ENCODE measurements at regions of chr17 and their contacts with region 1.

Region 1: DNA sequence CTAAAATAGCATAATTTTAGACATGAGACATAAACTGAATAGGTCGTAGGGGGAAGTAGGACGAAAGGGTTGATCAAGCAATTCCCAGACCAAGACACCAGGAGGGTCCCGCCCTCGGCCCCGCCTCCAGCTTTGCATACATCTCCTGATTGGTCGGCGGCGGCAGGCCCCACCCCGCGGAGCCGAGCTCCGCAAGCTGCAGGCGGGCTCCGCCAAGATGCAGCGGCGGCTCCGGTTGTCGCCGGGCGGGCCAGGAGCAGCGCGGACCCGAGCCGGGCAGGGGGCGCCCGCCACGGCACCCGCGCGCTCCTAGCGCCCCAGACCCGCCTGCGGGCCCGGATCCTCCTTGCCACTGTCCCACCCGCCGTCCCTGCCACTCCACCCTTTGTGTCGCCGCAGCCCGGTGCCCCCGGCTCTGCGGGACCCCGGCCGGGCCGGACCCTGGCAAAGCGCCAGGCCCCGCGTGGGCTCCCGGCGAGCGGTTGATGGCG is at the start of gene CDR2L:
- DNase-seq: peak; percentile 96 to 97
- ATAC-seq: peak; percentile 87 to 94 (median 92)
- H3K4me3 ChIP-seq: peak within 1 kb of the TSS; percentile 63 to 92 (median 80)
- H3K27ac ChIP-seq: peak within 1 kb of the TSS; percentile 87 to 100 (median 98)
- H3K4me1 ChIP-seq: peaks cover 0 to 52% (median 30%) of the 10 kb centered on the region in 9 donors
- H3K27me3 ChIP-seq: peaks cover 0 to 17% (median 0%) of the 10 kb centered on the region in 7 donors
- CTCF ChIP-seq: no peak
- total RNA-seq, gene CDR2L: 10.8 to 25.3 (median 16.3) TPM

Region 2: GRCh38 chr17:74923533-74924249 is 63.8 kb before region 1 on chr17:
- intact Hi-C with region 1: no loop called
- DNase-seq: peak; percentile 54 to 78
- ATAC-seq: peak; percentile 55 to 72 (median 62)
- H3K4me3 ChIP-seq: peak overlapping the region in 9 of 10 donors; percentile 16 to 46 (median 30)
- H3K27ac ChIP-seq: no peak overlapping the region
- H3K4me1 ChIP-seq: peaks cover 2 to 31% (median 22%) of the 10 kb centered on the region in 9 donors
- H3K27me3 ChIP-seq: peaks cover 22 to 96% (median 91%) of the 10 kb centered on the region in 7 donors
- CTCF ChIP-seq: peak; percentile 51 to 93 (median 79)

Region 3: DNA sequence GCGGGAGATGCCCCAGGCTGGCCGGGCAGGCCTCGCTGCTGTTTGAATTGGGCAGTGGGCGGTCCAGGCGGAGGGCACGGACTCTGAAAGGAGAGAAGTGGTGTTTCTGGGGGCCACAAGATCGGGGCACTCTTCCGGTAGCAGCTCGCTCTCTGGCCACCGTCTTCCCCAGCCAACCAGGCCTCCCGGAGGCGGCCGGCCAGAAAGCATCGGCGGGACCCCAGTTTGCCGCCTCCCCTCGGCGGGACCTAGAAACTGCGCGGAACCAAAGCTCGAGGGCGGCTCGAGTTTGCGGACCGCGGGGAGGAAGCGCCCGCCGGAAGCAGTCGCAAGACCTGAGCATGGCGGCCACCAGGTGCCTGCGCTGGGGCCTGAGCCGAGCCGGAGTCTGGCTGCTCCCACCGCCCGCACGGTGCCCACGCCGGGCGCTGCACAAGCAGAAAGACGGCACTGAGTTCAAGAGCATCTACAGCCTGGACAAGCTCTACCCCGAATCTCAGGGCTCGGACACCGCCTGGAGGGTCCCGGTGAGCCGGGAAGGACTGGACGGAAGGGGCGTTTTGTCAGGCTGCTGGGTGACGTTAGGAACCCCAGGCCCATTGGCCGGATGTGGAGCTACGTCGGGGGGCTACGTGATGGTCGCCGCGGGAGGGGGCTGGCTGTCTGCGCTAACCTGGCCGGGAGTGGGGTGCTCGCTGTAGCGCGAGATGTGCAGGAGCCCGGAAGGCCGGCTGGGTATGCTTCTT is 25.1 kb after region 1 on chr17 and contains the start of gene MRPL58:
- intact Hi-C with region 1: loop called in 3 of 10 experiments (anchors 1 to 2 kb)
- DNase-seq: peak; percentile 84 to 85
- ATAC-seq: peak; percentile 90 to 94 (median 92)
- H3K4me3 ChIP-seq: peak within 1 kb of the TSS; percentile 73 to 97 (median 90)
- H3K27ac ChIP-seq: peak within 1 kb of the TSS; percentile 87 to 96 (median 92)
- H3K4me1 ChIP-seq: peaks cover 12 to 35% (median 28%) of the 10 kb centered on the region in 9 donors
- H3K27me3 ChIP-seq: no peaks in the 10 kb centered on the region
- CTCF ChIP-seq: peak in 8 of 9 donors; percentile 28 to 72 (median 59)
- total RNA-seq, gene MRPL58: 43.7 to 64.1 (median 51.7) TPM

Region 4: DNA sequence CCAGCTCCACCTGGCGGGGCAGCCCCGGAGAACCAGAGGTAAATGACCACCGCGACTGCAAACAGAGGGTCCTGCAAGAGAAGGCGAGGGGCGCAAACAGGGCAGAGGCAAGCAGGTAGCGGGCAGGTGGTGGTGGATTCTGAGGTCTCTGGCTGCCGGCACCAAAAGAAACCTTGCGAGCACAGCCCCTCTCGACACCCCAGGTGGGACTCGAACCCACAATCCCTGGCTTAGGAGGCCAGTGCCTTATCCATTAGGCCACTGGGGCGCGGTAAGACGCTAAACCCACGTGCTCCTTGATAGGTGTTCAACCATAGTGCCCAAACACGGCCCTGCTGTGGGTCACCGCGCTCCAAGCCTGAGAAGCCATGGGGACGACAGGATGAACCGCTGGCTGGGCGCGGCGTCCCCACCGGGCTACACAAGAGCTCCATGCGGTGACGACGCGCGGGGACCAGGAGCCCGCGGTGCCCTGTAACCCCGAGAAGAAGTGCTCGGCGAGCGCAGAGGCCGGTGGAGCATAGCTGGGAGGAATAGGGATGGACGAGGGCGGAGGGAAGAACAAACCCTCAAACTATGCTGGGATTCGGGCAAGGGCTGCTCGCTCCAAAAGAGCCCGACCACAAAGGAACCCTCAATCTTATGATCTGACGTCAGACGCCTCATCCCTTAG is 46.9 kb after region 1 on chr17:
- intact Hi-C with region 1: loop called in 3 of 10 experiments (anchors 2 to 10 kb)
- DNase-seq: peak; percentile 81 to 90
- ATAC-seq: peak; percentile 68 to 87 (median 80)
- H3K4me3 ChIP-seq: peak overlapping the region; percentile 46 to 72 (median 66)
- H3K27ac ChIP-seq: peak overlapping the region; percentile 8 to 90 (median 84)
- H3K4me1 ChIP-seq: peaks cover 0 to 54% (median 44%) of the 10 kb centered on the region in 9 donors
- H3K27me3 ChIP-seq: no peaks in the 10 kb centered on the region
- CTCF ChIP-seq: peak in 1 of 9 donors; percentile 8

Region 5: GRCh38 chr17:75046582-75047289 is 59.3 kb after region 1 on chr17 and contains the starts of genes ATP5PD and KCTD2:
- intact Hi-C with region 1: loop called in 3 of 10 experiments (anchors 5 kb)
- DNase-seq: peak; percentile 96 to 97
- ATAC-seq: peak; percentile 98 to 99 (median 98)
- H3K4me3 ChIP-seq: peak within 1 kb of the TSS; percentile 74 to 100 (median 92)
- H3K27ac ChIP-seq: peak within 1 kb of the TSS; percentile 93 to 99 (median 98)
- H3K4me1 ChIP-seq: peaks cover 6 to 50% (median 31%) of the 10 kb centered on the region in 9 donors
- H3K27me3 ChIP-seq: no peaks in the 10 kb centered on the region
- CTCF ChIP-seq: peak in 2 of 9 donors; percentile 8 to 11
- total RNA-seq, gene ATP5PD: 678 to 1,003 (median 867) TPM
- total RNA-seq, gene KCTD2: 19.6 to 41.1 (median 29.6) TPM